ENCODE measurements at regions of chr2 and their contacts with region 1.

Region 1: GRCh38 chr2:60707750-60708371 is 48.2 kb upstream of the PAPOLG start:
- DNase-seq: peak; percentile 44
- H3K4me3 ChIP-seq: no peak overlapping the region
- H3K27ac ChIP-seq: no peak overlapping the region
- H3K4me1 ChIP-seq: peaks cover 5% of the 10 kb centered on the region
- H3K27me3 ChIP-seq: no peaks in the 10 kb centered on the region
- CTCF ChIP-seq: peak; percentile 48 to 52
- POLR2A ChIP-seq: no peak

Region 2: GRCh38 chr2:60416221-60417008 is 291.4 kb before region 1 on chr2:
- CTCF ChIA-PET with region 1: no interaction called
- POLR2A ChIA-PET with region 1: no interaction called
- dilution Hi-C with region 1: no loop called
- intact Hi-C with region 1: no loop called
- DNase-seq: no peak
- H3K4me3 ChIP-seq: no peak overlapping the region
- H3K27ac ChIP-seq: no peak overlapping the region
- H3K4me1 ChIP-seq: no peaks in the 10 kb centered on the region
- H3K27me3 ChIP-seq: no peaks in the 10 kb centered on the region
- CTCF ChIP-seq: no peak
- POLR2A ChIP-seq: no peak

Region 3: DNA sequence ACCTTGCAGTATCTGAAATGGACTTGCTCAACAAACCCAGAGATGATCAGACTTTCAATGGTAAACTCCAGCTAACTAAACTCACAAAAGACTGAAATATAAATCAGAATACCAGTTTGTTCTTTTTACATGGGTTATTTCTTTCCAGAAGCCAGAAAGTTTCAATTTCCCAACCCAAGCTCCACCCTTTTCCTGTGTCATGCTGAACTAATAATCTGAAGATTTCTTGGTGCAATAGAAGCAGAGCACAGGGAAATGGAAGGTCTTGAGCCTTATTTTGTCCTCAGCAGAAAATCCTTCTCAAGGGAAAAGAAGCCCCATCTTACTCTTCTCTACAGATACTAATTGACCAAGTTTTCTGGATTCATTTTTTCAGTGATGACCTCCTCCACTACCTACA is 45.1 kb before region 1 on chr2:
- CTCF ChIA-PET with region 1: no interaction called
- POLR2A ChIA-PET with region 1: no interaction called
- dilution Hi-C with region 1: no loop called
- intact Hi-C with region 1: no loop called
- DNase-seq: no peak
- H3K4me3 ChIP-seq: no peak overlapping the region
- H3K27ac ChIP-seq: no peak overlapping the region
- H3K4me1 ChIP-seq: no peaks in the 10 kb centered on the region
- H3K27me3 ChIP-seq: no peaks in the 10 kb centered on the region
- CTCF ChIP-seq: no peak
- POLR2A ChIP-seq: no peak

Region 4: GRCh38 chr2:60756191-60757041 is 48.6 kb after region 1 on chr2 and contains the start of gene PAPOLG:
- CTCF ChIA-PET with region 1: interaction called, 13 read pairs
- POLR2A ChIA-PET with region 1: no interaction called
- dilution Hi-C with region 1: no loop called
- intact Hi-C with region 1: loop called (anchors 1 kb)
- DNase-seq: peak; percentile 93
- H3K4me3 ChIP-seq: peak within 1 kb of the TSS; percentile 92 to 95 (median 93)
- H3K27ac ChIP-seq: peak within 1 kb of the TSS; percentile 81
- H3K4me1 ChIP-seq: peaks cover 14% of the 10 kb centered on the region
- H3K27me3 ChIP-seq: no peaks in the 10 kb centered on the region
- CTCF ChIP-seq: no peak
- POLR2A ChIP-seq: peak; percentile 94
- total RNA-seq, gene PAPOLG: 14.9 TPM in 2 replicates

Region 5: DNA sequence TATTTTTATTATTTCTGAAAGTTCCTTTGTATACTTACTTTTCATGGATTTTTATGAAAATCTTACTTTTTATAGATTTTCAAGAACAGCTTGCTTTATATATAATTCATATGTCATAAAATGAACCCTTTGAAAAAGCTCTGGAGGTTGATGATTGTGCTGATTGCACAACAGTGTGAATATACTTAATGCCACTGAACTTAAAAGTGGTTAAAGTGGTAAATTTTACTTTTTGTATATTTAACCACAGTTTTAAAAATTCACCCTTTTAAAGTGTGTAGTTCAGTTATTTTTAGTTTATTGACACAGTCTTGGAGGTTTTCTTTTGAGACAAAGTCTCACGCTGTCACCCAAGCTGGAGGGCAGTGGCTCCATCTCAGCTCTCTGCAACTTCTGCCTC is 366.2 kb after region 1 on chr2:
- CTCF ChIA-PET with region 1: no interaction called
- POLR2A ChIA-PET with region 1: no interaction called
- dilution Hi-C with region 1: no loop called
- intact Hi-C with region 1: no loop called
- DNase-seq: no peak
- H3K4me3 ChIP-seq: no peak overlapping the region
- H3K27ac ChIP-seq: no peak overlapping the region
- H3K4me1 ChIP-seq: no peaks in the 10 kb centered on the region
- H3K27me3 ChIP-seq: no peaks in the 10 kb centered on the region
- CTCF ChIP-seq: no peak
- POLR2A ChIP-seq: no peak